ENCODE measurements at regions of chr14 and their contacts with region 1.

Region 1: GRCh38 chr14:106417224-106418049 is 891.1 kb downstream of the TMEM121 start:
- DNase-seq: peak; percentile 38 to 90 (median 74)
- ATAC-seq: peak; percentile 61
- H3K4me3 ChIP-seq: no peak overlapping the region
- H3K4me3 Mint-ChIP-seq: no peak overlapping the region
- H3K27ac ChIP-seq: no peak overlapping the region
- H3K27ac Mint-ChIP-seq: peak overlapping the region; percentile 56
- H3K4me1 ChIP-seq: peaks cover 7% of the 10 kb centered on the region
- H3K4me1 Mint-ChIP-seq: peaks cover 15% of the 10 kb centered on the region
- H3K27me3 ChIP-seq: no peaks in the 10 kb centered on the region
- H3K27me3 Mint-ChIP-seq: peaks cover 10% of the 10 kb centered on the region
- CTCF ChIP-seq: peak; percentile 77

Region 2: DNA sequence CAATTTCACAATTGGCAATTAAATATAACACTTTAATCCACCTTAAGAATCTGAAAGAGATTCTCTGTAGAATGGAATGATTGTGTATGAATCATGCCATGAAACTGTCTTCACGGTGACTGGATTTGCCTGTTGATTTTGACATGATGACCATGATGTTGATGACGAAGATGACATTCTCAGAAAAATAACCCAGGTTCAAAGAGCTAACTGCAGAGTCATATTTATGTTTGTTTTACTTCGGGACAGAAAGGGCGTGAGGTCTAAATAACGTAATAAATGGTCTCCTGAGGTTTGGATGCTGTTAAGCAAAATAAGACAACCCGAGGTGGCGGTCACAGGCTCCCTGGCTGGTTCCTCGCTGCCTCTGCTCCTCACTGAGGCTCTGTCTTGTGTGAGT is 359.1 kb before region 1 on chr14:
- CTCF ChIA-PET with region 1: no interaction called
- POLR2A ChIA-PET with region 1: no interaction called
- intact Hi-C with region 1: no loop called
- DNase-seq: no peak
- ATAC-seq: no peak
- H3K4me3 ChIP-seq: no peak overlapping the region
- H3K4me3 Mint-ChIP-seq: no peak overlapping the region
- H3K27ac ChIP-seq: no peak overlapping the region
- H3K27ac Mint-ChIP-seq: no peak overlapping the region
- H3K4me1 ChIP-seq: peaks cover 24% of the 10 kb centered on the region
- H3K4me1 Mint-ChIP-seq: peaks cover 25% of the 10 kb centered on the region
- H3K27me3 ChIP-seq: peaks cover 0 to 3% of the 10 kb centered on the region in 2 experiments
- H3K27me3 Mint-ChIP-seq: peaks cover 4% of the 10 kb centered on the region
- CTCF ChIP-seq: no peak

Region 3: DNA sequence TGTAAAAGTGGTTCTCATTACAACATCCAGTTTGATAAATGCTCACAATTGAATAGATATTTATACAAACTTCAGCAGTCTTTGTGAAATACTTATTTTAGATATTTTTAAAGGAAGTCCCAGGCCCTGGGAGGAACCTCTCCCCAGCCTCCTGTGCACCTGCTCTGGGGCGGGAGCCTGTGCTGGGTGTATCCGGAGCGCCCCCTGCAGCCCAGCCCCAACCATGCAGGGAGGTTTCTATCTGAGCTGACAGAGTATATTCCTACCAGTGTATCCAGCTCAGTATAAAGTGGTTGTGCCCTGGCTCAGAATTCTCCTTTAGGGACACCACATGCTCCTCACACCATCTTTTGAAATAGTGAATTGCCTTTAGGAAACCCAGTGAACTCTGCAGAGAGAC is 39.2 kb before region 1 on chr14:
- CTCF ChIA-PET with region 1: interaction called, 12 read pairs
- POLR2A ChIA-PET with region 1: no interaction called
- intact Hi-C with region 1: no loop called
- DNase-seq: peak in 11 of 14 experiments; percentile 8 to 63 (median 37)
- ATAC-seq: peak; percentile 59
- H3K4me3 ChIP-seq: no peak overlapping the region
- H3K4me3 Mint-ChIP-seq: no peak overlapping the region
- H3K27ac ChIP-seq: no peak overlapping the region
- H3K27ac Mint-ChIP-seq: no peak overlapping the region
- H3K4me1 ChIP-seq: peaks cover 16% of the 10 kb centered on the region
- H3K4me1 Mint-ChIP-seq: peaks cover 20% of the 10 kb centered on the region
- H3K27me3 ChIP-seq: no peaks in the 10 kb centered on the region
- H3K27me3 Mint-ChIP-seq: peaks cover 4% of the 10 kb centered on the region
- CTCF ChIP-seq: peak; percentile 63

Measured in CD4-positive, alpha-beta T cell (primary cell).